Activated T-helper 2 cell treated with anti-CD3 and anti-CD28 coated beads, Interferon-gamma antibody, Interleukin-2, Interleukin-4, amounts not matched to agents 10 μg/mL and 5 μg/mL and 100 μg/mL, durations not matched to agents 14 hours and 24 hours and 36 hours (primary cell): ENCODE measurements at regions of chr18 and their contacts with region 1.

Region 1: GRCh38 chr18:27845897-27846296 is 331.0 kb downstream of the CDH2 start:
- DNase-seq: no peak
- H3K4me3 Mint-ChIP-seq: no peak overlapping the region
- H3K27ac Mint-ChIP-seq: no peak overlapping the region
- H3K4me1 Mint-ChIP-seq: no peaks in the 10 kb centered on the region
- H3K27me3 Mint-ChIP-seq: no peaks in the 10 kb centered on the region

Region 2: DNA sequence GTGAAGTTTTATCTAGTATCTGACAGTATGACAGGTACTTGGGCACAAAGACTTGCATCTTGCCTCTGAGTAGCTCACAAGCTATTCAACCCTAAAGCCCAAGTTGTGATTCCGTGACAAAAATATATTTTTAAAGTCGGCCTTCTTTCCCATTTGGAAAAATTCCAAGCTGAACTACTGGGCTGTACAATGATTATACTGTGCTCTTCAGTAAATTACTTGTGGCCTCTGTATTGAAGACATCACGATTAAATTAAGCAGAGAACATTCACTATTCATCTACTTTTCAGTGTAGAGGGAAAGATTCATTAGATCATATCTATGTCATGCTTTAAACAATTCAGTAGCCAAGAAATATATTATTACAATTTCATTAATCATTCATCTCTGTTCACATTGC is 48.8 kb after region 1 on chr18:
- intact Hi-C with region 1: no loop called
- DNase-seq: no peak
- H3K4me3 Mint-ChIP-seq: no peak overlapping the region
- H3K27ac Mint-ChIP-seq: no peak overlapping the region
- H3K4me1 Mint-ChIP-seq: no peaks in the 10 kb centered on the region
- H3K27me3 Mint-ChIP-seq: no peaks in the 10 kb centered on the region

Region 3: GRCh38 chr18:28512357-28512756 is 666.5 kb after region 1 on chr18:
- intact Hi-C with region 1: loop called (anchors 5 kb)
- DNase-seq: no peak
- H3K4me3 Mint-ChIP-seq: no peak overlapping the region
- H3K27ac Mint-ChIP-seq: no peak overlapping the region
- H3K4me1 Mint-ChIP-seq: no peaks in the 10 kb centered on the region
- H3K27me3 Mint-ChIP-seq: no peaks in the 10 kb centered on the region